ENCODE measurements at regions of chr2 and their contacts with region 1.

Region 1: DNA sequence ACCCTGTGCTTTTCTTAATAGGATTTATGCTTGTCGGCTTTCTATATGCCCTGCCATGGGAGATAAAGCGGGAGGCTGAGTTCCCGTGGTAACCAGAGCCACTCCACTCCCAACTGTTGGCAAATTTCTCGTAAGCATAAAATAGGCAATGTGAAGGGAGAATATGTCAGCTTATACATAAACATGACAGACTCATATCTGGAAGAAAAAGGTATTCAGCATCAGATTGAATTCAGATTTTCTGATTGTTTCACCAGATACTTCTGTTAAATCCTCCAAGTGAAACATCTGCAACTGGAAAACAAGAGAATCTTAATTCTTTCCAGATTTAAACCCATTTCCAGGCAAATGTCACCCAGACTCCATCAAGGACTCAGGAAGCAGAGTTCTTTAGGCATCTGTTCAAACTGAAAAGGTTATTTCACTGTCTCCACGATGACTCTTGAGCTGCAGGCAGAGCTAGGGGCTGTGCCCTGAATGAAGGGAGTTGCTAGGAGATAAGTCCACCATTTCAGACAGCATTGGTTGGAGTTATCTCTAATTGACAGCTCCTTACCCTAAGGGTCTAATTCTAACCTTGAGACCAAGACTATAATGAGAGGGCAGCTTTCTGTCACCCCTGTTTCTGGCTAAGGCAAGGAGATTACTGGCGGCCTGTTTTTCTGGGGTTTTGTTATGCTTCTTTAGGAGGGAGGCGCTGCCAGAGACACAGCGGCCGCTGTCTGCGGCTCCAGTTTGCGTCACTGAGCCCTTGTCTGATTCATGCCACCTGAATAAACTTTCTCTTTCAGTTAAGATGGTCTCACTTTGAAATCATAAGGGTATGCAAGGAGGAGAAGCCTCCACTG is 381.3 kb downstream of the SOX11 start:
- DNase-seq: no peak
- ATAC-seq: no peak

Region 2: GRCh38 chr2:5915881-5916310 is 157.6 kb before region 1 on chr2:
- intact Hi-C with region 1: no loop called
- DNase-seq: no peak
- ATAC-seq: no peak

Region 3: GRCh38 chr2:5946225-5947115 is 127.0 kb before region 1 on chr2:
- intact Hi-C with region 1: loop called (anchors 10 kb)
- DNase-seq: no peak
- ATAC-seq: no peak

Region 4: GRCh38 chr2:6196449-6196848 is 123.0 kb after region 1 on chr2:
- intact Hi-C with region 1: no loop called
- DNase-seq: no peak
- ATAC-seq: no peak

Measured in Right ventricle myocardium inferior (tissue), 1 donor.